A673 (cell line): ENCODE measurements at regions of chr5 and their contacts with region 1.

Region 1: GRCh38 chr5:148730943-148731861 is 76.9 kb upstream of the HTR4 start:
- DNase-seq: peak; percentile 88
- H3K4me3 ChIP-seq: no peak overlapping the region
- H3K27ac ChIP-seq: no peak overlapping the region
- H3K4me1 ChIP-seq: no peaks in the 10 kb centered on the region
- H3K27me3 ChIP-seq: peaks cover 74% of the 10 kb centered on the region
- CTCF ChIP-seq: peak; percentile 97

Region 2: GRCh38 chr5:147949711-147950573 is 781.3 kb before region 1 on chr5:
- CTCF ChIA-PET with region 1: no interaction called
- POLR2A ChIA-PET with region 1: no interaction called
- intact Hi-C with region 1: loop called (anchors 1 kb)
- DNase-seq: peak; percentile 65
- H3K4me3 ChIP-seq: no peak overlapping the region
- H3K27ac ChIP-seq: no peak overlapping the region
- H3K4me1 ChIP-seq: no peaks in the 10 kb centered on the region
- H3K27me3 ChIP-seq: no peaks in the 10 kb centered on the region
- CTCF ChIP-seq: peak; percentile 75

Region 3: GRCh38 chr5:148191010-148191409 is 540.2 kb before region 1 on chr5:
- CTCF ChIA-PET with region 1: no interaction called
- POLR2A ChIA-PET with region 1: no interaction called
- intact Hi-C with region 1: no loop called
- DNase-seq: no peak
- H3K4me3 ChIP-seq: no peak overlapping the region
- H3K27ac ChIP-seq: no peak overlapping the region
- H3K4me1 ChIP-seq: no peaks in the 10 kb centered on the region
- H3K27me3 ChIP-seq: peaks cover 38% of the 10 kb centered on the region
- CTCF ChIP-seq: no peak

Region 4: DNA sequence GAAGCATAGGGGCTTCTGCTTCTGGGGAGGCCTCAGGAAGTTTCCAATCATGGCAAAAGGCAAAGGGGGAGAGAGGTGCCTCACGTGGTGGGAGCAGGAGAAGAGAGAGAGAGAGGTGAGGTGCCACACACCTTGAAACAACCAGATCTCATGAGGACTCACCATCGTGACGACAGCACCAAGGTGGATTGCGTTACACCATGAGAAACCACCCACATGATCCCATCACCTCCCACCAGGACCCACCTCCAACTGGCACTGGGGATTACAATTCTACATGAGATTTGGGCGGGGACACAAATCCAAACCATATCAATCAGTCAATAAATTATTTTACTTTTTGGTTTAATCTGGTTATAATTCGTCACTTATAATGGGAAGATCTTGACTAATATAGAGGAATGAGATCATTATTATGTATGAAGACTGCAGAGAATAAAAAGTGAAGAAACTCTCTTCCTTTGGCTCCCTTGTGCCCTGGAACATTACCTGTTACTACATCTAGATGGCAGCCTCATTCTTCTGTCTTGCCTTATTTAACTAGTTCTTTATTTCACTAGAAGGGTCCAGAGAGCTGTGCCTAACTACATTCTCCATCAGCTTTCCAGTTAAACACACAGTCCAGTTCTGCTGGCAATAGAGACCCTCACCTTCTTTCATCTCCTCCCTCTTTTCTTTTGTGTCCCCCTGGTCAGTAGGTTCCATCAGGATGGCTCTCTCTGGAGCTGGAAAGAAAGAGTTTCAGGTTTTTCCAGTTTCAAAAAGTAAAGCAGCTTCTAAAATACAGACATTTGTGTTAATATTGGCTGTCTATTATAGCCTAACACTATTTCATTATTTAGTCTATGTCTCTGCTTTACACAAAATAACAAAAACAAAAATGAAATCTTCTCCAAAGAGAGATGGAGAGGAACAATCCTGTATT is 440.7 kb before region 1 on chr5:
- CTCF ChIA-PET with region 1: interaction called, 16 read pairs
- POLR2A ChIA-PET with region 1: no interaction called
- intact Hi-C with region 1: no loop called
- DNase-seq: peak; percentile 13
- H3K4me3 ChIP-seq: no peak overlapping the region
- H3K27ac ChIP-seq: no peak overlapping the region
- H3K4me1 ChIP-seq: no peaks in the 10 kb centered on the region
- H3K27me3 ChIP-seq: peaks cover 35% of the 10 kb centered on the region
- CTCF ChIP-seq: peak; percentile 43

Region 5: DNA sequence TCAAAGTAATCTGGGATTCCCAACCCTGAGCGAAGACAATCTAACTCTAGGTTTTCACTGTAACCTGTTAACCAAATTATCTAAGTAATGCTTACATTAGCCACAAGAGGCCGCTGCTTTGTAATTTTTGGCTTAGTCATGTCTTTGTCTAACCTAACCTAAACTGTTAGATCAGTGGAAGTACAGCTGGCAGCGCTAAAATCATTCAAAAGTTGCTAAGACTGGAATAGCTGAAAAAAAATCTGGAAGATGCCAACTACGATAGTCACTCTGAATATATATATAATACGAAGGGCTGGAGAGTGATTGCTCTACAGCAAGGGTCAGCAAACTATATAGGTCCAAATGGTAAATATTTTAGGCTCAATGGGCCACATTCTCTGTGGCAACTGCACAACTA is 287.2 kb before region 1 on chr5:
- CTCF ChIA-PET with region 1: interaction called, 14 read pairs
- POLR2A ChIA-PET with region 1: no interaction called
- intact Hi-C with region 1: loop called (anchors 1 kb)
- DNase-seq: peak; percentile 76
- H3K4me3 ChIP-seq: no peak overlapping the region
- H3K27ac ChIP-seq: no peak overlapping the region
- H3K4me1 ChIP-seq: no peaks in the 10 kb centered on the region
- H3K27me3 ChIP-seq: no peaks in the 10 kb centered on the region
- CTCF ChIP-seq: peak; percentile 79

Region 6: DNA sequence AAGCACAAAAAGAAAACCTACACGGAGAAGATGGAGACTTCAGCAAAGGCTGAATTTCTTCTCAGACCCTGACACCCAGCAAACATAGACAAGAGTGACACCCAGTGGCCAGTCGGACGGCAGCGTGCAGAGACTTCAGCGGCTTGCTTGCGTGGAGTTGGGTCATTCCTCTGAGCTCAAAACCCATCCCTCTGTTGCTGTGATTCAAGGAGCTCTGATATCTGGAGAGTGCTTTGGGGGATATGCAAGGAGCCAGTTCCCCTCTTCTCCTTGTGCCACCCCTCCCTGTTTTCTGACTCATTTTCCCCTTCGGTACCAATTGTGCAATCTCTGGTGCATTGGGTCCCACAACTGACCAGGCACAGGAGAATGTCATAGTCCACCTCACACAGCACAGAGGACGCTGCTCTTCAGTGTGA is 304.2 kb after region 1 on chr5:
- CTCF ChIA-PET with region 1: interaction called, 15 read pairs
- POLR2A ChIA-PET with region 1: no interaction called
- intact Hi-C with region 1: loop called (anchors 1 kb)
- DNase-seq: peak; percentile 80
- H3K4me3 ChIP-seq: no peak overlapping the region
- H3K27ac ChIP-seq: no peak overlapping the region
- H3K4me1 ChIP-seq: no peaks in the 10 kb centered on the region
- H3K27me3 ChIP-seq: no peaks in the 10 kb centered on the region
- CTCF ChIP-seq: peak; percentile 85

Region 7: GRCh38 chr5:149133795-149134780 is 402.9 kb after region 1 on chr5:
- CTCF ChIA-PET with region 1: no interaction called
- POLR2A ChIA-PET with region 1: no interaction called
- intact Hi-C with region 1: no loop called
- DNase-seq: no peak
- H3K4me3 ChIP-seq: no peak overlapping the region
- H3K27ac ChIP-seq: no peak overlapping the region
- H3K4me1 ChIP-seq: no peaks in the 10 kb centered on the region
- H3K27me3 ChIP-seq: peaks cover 59% of the 10 kb centered on the region
- CTCF ChIP-seq: no peak

Region 8: DNA sequence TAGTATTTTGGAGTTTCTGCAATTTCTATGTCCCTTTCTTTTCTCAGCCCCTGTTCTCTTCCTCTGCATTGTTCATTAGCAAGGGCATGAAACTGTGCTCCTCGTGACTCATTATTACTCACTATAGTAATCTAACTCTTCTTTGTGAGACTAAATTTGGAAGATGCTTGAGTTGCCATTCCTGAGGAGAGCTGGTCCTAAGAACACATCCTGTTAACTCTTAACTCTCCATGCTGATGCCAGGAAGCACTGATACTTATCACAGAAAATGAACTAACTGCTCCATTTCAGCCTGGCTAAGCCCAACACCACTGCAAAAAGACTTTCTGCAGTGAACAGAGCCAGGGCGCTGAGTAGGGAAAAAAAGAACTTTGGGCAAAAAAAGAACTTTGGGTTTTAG is 830.6 kb after region 1 on chr5:
- CTCF ChIA-PET with region 1: no interaction called
- POLR2A ChIA-PET with region 1: no interaction called
- intact Hi-C with region 1: loop called (anchors 5 kb)
- DNase-seq: peak; percentile 94
- H3K4me3 ChIP-seq: peak overlapping the region; percentile 21
- H3K27ac ChIP-seq: peak overlapping the region; percentile 73
- H3K4me1 ChIP-seq: peaks cover 31% of the 10 kb centered on the region
- H3K27me3 ChIP-seq: no peaks in the 10 kb centered on the region
- CTCF ChIP-seq: no peak